ENCODE measurements at regions of chr11 and their contacts with region 1.

Region 1: GRCh38 chr11:65961232-65961901 is at the start of gene SART1:
- DNase-seq: peak; percentile 99
- total RNA-seq, gene SART1: 35.9 TPM

Region 2: DNA sequence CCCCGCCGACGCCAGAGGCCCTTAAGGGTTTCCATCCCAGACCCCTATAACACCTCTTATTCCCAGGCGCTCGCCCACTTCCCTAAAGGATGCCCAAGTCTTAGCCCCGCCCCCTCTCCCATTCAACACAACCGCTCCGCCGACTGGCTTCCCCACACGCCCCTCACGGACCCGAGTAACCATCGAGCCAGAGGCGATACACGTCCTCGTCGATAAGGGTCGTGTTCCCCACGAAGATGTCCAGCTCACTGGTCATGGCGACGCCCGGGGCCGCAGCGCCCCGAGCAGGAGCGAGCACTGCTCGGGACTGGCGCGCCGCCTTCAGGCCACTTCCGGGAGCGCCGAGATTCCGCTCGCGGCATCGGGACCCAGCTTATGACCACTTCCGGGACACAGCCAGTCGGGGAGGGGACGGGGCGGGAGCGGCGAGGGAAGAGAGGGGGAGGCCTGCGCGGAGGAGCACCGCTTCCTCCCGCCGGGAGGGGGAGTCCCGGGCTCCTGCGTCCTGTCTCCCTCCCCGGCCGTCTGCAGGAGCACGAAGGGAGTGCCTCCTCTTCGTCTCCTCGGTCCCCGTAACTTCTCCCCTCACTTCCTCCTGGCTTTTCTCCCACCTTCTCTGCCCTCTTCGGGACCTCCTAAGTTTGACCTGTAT is 73.1 kb before region 1 on chr11 and contains the start of gene FIBP:
- intact Hi-C with region 1: loop called (anchors 2 kb)
- DNase-seq: peak; percentile 99
- total RNA-seq, gene FIBP: 62.6 TPM

Region 3: DNA sequence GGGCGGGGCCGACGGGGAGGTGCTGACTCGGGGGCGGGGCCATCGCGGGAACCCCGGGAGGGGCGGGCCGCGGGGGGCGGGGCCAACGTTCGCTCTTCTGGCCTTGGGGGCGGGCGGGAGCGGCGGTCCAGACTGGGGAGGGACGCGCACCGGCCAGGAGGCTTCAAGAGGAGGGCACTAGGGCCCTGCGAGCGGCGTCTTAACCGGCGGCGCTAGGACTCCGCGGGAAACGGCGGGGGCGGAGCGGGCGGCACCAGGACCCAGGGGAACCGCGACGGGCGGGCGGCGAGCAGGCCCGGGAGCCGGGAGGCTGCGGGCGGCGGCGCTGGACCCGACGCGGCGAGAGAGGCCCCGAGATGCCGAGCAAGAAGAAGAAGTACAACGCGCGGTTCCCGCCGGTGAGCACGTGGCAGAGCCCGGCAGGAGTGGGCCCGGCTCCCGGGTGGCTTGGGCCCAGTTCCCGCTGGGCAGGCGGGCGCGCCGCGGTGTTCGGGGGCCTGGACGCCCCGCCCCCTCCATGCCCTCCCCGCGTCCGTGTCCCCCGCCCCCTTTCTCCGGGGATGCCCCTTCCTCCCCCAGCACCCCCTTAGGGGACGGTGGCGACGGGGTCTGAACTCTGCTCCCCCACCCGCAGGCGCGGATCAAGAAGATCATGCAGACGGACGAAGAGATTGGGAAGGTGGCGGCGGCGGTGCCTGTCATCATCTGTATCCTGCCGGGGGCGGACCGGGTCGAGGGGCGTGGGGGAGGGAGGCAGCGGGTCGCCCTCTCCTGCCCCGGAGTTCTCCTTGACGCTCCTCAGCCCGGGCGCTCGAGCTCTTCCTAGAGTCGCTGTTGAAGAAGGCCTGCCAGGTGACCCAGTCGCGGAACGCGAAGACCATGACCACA is 42.0 kb before region 1 on chr11 and contains the start of gene DRAP1:
- intact Hi-C with region 1: loop called (anchors 2 kb)
- DNase-seq: peak; percentile 100
- total RNA-seq, gene DRAP1: 113 TPM

Region 4: GRCh38 chr11:66001942-66002647 is 40.7 kb after region 1 on chr11 and contains the starts of genes BANF1 and EIF1AD:
- intact Hi-C with region 1: loop called (anchors 1 kb)
- DNase-seq: peak; percentile 96
- total RNA-seq, gene BANF1: 195 TPM
- total RNA-seq, gene EIF1AD: 18.1 TPM

Region 5: GRCh38 chr11:66051766-66052663 is 90.6 kb after region 1 on chr11 and contains the start of gene SF3B2:
- intact Hi-C with region 1: loop called (anchors 1 kb)
- DNase-seq: peak; percentile 99
- total RNA-seq, gene SF3B2: 85.8 TPM

Region 6: DNA sequence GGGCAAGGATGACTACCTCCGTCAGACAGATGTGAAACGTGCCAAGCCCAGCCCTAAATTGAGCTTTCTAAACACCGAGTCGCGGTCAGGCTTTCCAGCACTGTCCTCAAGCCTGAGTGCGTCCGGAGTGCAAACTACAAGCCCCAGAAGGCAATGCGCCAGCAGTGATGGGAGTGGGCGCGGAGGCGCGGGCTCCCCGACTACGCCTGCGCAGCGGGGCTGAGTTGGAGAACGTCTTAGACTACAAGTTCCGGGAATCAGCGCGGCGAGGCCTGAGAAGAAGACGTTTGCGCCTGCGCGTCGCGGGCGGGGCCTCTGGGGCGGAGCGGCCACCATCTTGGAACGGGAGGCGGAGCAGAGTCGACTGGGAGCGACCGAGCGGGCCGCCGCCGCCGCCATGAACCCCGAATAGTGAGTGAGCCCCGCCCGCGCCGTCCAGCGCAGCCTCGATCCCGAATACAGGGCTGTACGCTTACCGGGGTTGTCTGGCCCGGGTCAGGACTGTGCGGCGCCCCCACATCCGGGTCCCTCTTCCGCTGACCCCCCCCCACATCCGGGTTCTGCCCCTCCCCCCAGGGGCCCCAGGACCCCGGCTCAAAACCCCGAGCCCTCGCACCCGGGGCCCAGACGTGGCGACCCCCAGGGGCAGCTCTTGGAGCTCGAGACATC is 307.1 kb after region 1 on chr11 and contains the start of gene RAB1B:
- intact Hi-C with region 1: loop called (anchors 5 kb)
- DNase-seq: peak; percentile 100
- total RNA-seq, gene RAB1B: 124 TPM

Region 7: DNA sequence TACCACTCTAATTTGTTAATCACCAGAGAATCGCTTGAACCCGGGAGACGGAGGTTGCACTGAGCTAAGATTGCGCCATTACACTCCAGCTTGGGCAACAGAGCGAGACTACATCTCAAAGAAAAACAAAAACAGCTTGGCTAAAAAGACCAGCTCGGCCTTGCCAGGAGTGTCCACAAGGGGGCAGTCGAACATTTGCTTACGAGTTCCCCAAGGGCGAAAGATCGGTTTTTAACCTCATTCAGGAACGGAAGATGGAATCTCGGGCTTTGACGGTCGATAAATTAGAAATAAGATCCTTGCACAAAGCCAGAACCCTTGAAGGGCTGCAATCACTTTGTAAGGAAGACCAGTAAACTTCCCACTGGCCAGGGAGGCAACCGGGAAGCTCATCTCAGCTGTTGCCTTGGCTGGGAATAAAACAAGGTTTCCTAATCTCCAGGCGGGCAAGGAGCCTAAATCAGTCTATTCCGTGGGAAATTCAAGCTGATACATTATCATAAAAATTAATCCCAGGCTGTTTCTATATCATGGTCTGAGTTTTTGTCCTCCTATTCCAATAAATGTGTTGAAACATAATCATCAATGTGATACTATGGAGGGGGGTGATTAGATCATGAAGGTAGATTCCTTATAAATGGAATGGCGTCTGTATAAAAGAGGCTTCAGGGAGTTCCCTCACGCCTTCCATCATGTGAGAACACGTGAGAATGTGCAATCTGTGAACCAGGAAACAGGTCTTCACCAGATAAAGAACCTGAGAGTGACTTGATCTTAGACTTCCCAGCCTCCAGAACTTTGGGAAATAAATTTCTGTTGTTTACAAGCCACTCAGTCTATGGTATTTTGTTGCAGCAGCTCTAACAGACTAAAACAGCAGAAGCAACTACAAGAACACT is 425.1 kb after region 1 on chr11:
- intact Hi-C with region 1: no loop called
- DNase-seq: peak; percentile 86

Measured in cardiac septum (tissue), 1 donor.